Natural killer cell (primary cell): ENCODE measurements at regions of chr17 and their contacts with region 1.

Region 1: GRCh38 chr17:59837308-59838051 is 55.3 kb downstream of the TUBD1 start:
- DNase-seq: peak; percentile 31 to 92
- ATAC-seq: peak; percentile 94 to 97 (median 96)
- H3K4me3 ChIP-seq: peak overlapping the region; percentile 65
- H3K4me3 Mint-ChIP-seq: peak overlapping the region; percentile 98
- H3K27ac ChIP-seq: peak overlapping the region; percentile 87
- H3K27ac Mint-ChIP-seq: peak overlapping the region; percentile 89 to 99
- H3K4me1 ChIP-seq: peaks cover 15% of the 10 kb centered on the region
- H3K4me1 Mint-ChIP-seq: peaks cover 45 to 48% of the 10 kb centered on the region in 2 donors
- H3K27me3 ChIP-seq: no peaks in the 10 kb centered on the region
- H3K27me3 Mint-ChIP-seq: no peaks in the 10 kb centered on the region
- CTCF ChIP-seq: no peak

Region 2: GRCh38 chr17:59547131-59547915 is 290.2 kb before region 1 on chr17:
- intact Hi-C with region 1: no loop called
- DNase-seq: no peak
- ATAC-seq: no peak
- H3K4me3 ChIP-seq: no peak overlapping the region
- H3K4me3 Mint-ChIP-seq: no peak overlapping the region
- H3K27ac ChIP-seq: no peak overlapping the region
- H3K27ac Mint-ChIP-seq: no peak overlapping the region
- H3K4me1 ChIP-seq: peaks cover 3% of the 10 kb centered on the region
- H3K4me1 Mint-ChIP-seq: no peaks in the 10 kb centered on the region
- H3K27me3 ChIP-seq: no peaks in the 10 kb centered on the region
- H3K27me3 Mint-ChIP-seq: peaks cover 8 to 10% of the 10 kb centered on the region in 2 donors
- CTCF ChIP-seq: no peak

Region 3: DNA sequence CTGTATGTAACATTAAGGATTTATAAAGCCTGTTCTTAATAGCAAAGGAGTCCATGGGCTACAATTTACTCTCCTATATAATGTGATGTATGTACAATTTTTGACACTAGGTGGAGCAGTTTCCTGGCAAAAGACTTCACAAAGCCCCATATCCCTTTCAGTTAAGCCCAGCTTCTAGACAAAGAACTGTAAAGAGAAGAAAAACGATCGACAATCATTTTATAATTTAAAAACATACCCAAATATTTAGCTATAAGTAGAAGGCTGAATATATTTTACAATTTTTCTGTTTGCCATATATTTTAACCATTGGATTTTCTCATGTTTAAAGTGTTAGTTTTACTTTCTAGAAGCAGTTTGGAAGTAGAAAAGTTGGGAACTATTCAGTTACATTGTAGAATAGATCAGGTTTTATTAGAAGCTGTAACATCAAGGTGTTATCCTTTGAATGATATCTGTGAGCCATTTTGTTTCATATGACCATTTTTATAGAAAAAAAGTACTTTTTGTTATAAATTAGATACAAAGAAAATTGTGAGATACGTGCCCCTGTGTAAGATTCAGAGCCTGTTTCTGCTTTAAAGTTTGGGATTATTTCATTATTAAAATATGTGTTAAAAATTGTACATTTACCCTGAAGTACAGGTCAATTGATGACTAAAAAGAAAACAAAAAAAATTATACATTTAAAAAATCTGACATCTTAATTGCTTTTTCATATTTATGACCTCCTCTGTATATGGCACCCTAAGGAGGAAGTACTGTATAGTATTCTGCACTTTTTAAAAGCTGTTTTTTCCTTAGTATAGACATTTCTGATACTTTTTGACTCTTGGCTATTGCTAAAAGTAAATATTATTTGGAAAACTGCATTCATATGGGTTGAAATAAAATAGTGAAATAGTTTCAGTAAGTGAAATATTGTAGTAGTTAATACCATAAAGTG is 83.7 kb before region 1 on chr17:
- intact Hi-C with region 1: loop called (anchors 5 kb)
- DNase-seq: peak in 1 of 2 donors; percentile 90
- ATAC-seq: peak; percentile 91 to 99 (median 97)
- H3K4me3 ChIP-seq: no peak overlapping the region
- H3K4me3 Mint-ChIP-seq: peak overlapping the region; percentile 21
- H3K27ac ChIP-seq: no peak overlapping the region
- H3K27ac Mint-ChIP-seq: peak overlapping the region; percentile 61 to 68
- H3K4me1 ChIP-seq: no peaks in the 10 kb centered on the region
- H3K4me1 Mint-ChIP-seq: peaks cover 0 to 9% of the 10 kb centered on the region in 2 donors
- H3K27me3 ChIP-seq: no peaks in the 10 kb centered on the region
- H3K27me3 Mint-ChIP-seq: no peaks in the 10 kb centered on the region
- CTCF ChIP-seq: peak; percentile 75

Region 4: DNA sequence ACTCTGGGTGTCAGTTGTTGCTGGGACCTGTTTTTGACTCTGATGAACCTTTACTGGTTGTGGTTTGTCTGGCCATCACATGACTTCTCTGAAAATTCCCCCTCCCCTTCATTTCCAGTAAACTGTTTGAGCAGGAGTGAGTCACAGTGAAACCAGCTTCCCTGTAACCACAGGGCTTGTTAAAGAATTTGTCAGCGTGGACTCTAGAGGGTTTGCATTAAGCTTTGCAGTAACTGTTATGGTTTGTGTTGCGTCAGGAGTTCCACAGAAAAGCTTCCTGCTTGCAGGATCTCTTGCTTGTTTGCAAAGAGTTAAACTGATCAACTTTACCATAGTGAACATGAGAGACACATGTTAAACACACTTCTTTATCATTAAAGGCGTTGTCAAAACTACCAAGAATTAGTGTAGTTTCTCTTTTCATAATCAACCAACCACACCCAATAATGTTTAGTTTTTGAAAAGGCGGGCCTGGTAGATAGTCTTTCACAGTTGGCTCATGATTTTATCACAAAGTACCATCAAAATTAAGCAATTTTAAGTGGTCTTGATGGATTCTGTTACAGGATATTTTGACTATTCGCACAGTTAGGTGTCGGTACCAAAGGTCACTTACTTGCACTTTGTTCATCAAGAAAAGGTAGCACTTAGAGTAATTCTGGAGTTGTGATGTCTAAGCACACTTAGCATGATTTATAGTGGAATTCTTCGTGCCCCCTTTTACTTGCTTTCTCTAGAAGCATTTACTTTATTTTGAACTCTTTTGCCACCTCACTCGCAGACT is 50.8 kb before region 1 on chr17:
- intact Hi-C with region 1: loop called (anchors 1 kb)
- DNase-seq: peak; percentile 52 to 95
- ATAC-seq: peak; percentile 89 to 96 (median 94)
- H3K4me3 ChIP-seq: peak overlapping the region; percentile 28
- H3K4me3 Mint-ChIP-seq: peak overlapping the region; percentile 89
- H3K27ac ChIP-seq: peak overlapping the region; percentile 89
- H3K27ac Mint-ChIP-seq: peak overlapping the region; percentile 93 to 97
- H3K4me1 ChIP-seq: peaks cover 20% of the 10 kb centered on the region
- H3K4me1 Mint-ChIP-seq: peaks cover 28 to 29% of the 10 kb centered on the region in 2 donors
- H3K27me3 ChIP-seq: no peaks in the 10 kb centered on the region
- H3K27me3 Mint-ChIP-seq: no peaks in the 10 kb centered on the region
- CTCF ChIP-seq: no peak

Region 5: GRCh38 chr17:59892924-59893676 is 55.6 kb after region 1 on chr17 and contains the starts of genes RPS6KB1 and TUBD1:
- intact Hi-C with region 1: loop called (anchors 2 kb)
- DNase-seq: peak; percentile 94 to 100
- ATAC-seq: peak; percentile 89 to 97 (median 93)
- H3K4me3 ChIP-seq: peak within 1 kb of the TSS; percentile 90
- H3K4me3 Mint-ChIP-seq: peak within 1 kb of the TSS; percentile 100
- H3K27ac ChIP-seq: peak within 1 kb of the TSS; percentile 94
- H3K27ac Mint-ChIP-seq: peak within 1 kb of the TSS; percentile 96 to 99
- H3K4me1 ChIP-seq: peaks cover 24% of the 10 kb centered on the region
- H3K4me1 Mint-ChIP-seq: peaks cover 40 to 52% of the 10 kb centered on the region in 2 donors
- H3K27me3 ChIP-seq: no peaks in the 10 kb centered on the region
- H3K27me3 Mint-ChIP-seq: no peaks in the 10 kb centered on the region
- CTCF ChIP-seq: no peak
- total RNA-seq, gene RPS6KB1: 70.6 to 85.0 (median 78.2) TPM
- total RNA-seq, gene TUBD1: 8.4 to 9.0 (median 8.4) TPM